GM12878 (cell line): ENCODE measurements at regions of chr5 and their contacts with region 1.

Region 1: GRCh38 chr5:95730730-95731570 is at the start of gene RHOBTB3:
- DNase-seq: no peak
- ATAC-seq: peak; percentile 53
- H3K4me3 ChIP-seq: peak within 1 kb of the TSS; percentile 78
- H3K27ac ChIP-seq: peak within 1 kb of the TSS; percentile 70
- H3K4me1 ChIP-seq: peaks cover 21% of the 10 kb centered on the region
- H3K27me3 ChIP-seq: no peaks in the 10 kb centered on the region
- CTCF ChIP-seq: peak in 2 of 3 experiments; percentile 4 to 22; a peak in 3 of 6 replicates
- EP300 ChIP-seq: 0 out of 4 replicates have a peak, but pooled peaks of 1 of the 2 experiments have one; percentile 8
- POLR2A ChIP-seq: peak; percentile 77
- RAD21 ChIP-seq: no peak
- polyA plus RNA-seq, gene RHOBTB3: 3.6 to 4.1 TPM

Region 2: DNA sequence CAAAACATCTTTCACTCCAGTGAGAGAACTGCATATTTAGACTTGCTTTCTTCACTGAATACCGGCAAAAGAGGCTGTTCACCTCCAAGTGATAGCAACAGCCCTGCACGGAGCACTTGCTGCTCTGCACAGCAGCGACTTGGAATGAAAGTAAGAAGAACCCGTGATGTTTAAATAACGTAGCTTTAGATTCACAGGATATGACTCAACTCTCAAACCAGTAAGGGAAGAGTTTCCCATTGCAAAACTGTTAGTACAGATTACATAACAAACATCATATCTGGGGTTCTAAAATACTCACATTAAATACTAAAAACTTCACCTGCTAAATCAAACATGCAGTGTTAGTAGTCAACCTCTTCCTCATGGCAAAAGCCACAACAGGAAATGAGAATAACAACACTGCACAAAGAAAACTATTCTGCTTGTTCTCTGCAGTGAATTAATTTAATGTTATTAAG is 649.4 kb before region 1 on chr5:
- CTCF ChIA-PET with region 1: no interaction called
- POLR2A ChIA-PET with region 1: no interaction called
- RAD21 ChIA-PET with region 1: no interaction called
- SMC1A ChIA-PET with region 1: no interaction called
- in situ Hi-C with region 1: no loop called
- intact Hi-C with region 1: loop called (anchors 10 kb)
- DNase-seq: peak; percentile 89
- ATAC-seq: peak; percentile 85
- H3K4me3 ChIP-seq: peak overlapping the region; percentile 37
- H3K27ac ChIP-seq: peak overlapping the region; percentile 66
- H3K4me1 ChIP-seq: no peaks in the 10 kb centered on the region
- H3K27me3 ChIP-seq: no peaks in the 10 kb centered on the region
- CTCF ChIP-seq: no peak
- EP300 ChIP-seq: peak; percentile 26 to 55; a peak in 2 of 4 replicates
- POLR2A ChIP-seq: peak; percentile 85
- RAD21 ChIP-seq: no peak

Region 3: DNA sequence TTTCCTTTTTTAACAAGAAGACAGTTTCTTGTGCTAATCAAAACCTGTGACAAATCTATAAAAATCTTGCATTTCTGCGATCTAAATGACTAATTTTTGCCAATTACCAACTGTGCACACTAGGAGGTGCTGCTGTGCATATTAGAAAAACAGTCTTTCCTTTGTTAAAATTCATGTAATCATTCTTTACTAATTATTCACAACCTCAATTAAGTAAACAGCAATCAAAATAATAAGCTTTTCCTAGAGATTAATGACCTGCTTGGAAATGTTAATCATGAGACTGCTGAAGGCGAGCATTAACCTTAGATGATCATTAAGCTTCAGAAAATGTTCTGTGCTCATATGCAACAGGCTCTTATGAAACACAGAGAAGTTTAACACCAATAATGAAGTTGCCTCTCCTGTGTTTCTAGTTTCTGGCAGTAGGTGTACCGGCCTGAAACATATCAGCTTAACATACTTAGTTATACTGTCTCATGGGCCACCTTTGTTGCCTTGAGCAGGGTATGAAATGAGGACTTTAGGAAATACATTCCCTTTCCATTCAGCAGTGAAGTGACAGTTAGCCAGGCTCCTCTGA is 66.7 kb before region 1 on chr5:
- CTCF ChIA-PET with region 1: interaction called, 23 read pairs
- POLR2A ChIA-PET with region 1: no interaction called
- RAD21 ChIA-PET with region 1: interaction called, 25 read pairs
- SMC1A ChIA-PET with region 1: interaction called, 46 read pairs
- in situ Hi-C with region 1: no loop called
- intact Hi-C with region 1: loop called (anchors 1 kb)
- DNase-seq: peak; percentile 11
- ATAC-seq: peak; percentile 38; the same call in 2 of the 3 replicates
- H3K4me3 ChIP-seq: no peak overlapping the region
- H3K27ac ChIP-seq: no peak overlapping the region
- H3K4me1 ChIP-seq: no peaks in the 10 kb centered on the region
- H3K27me3 ChIP-seq: no peaks in the 10 kb centered on the region
- CTCF ChIP-seq: peak; percentile 66 to 84 (median 80)
- EP300 ChIP-seq: no peak
- POLR2A ChIP-seq: no peak
- RAD21 ChIP-seq: peak; percentile 76

Region 4: DNA sequence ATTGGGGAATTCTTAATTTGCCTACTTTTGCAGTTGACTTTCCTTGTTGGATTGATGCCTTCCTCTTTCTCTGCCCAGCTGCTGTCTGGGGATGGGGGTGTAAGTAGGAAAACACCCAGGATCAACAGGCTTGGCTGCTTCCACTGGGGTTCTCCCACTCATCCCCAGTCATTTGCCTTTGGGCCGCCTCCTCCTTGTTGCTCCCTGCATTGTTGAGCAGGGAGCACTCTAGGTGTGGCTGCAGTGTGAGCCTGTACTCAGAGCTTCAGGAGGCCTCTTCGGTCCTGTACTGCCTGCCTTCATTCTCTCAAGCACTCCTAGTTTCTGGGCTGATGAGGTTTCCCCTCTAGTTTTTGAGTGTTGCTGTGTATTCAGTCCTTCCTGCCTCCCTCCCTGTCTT is 12.3 kb after region 1 on chr5:
- CTCF ChIA-PET with region 1: interaction called, 7 read pairs
- POLR2A ChIA-PET with region 1: interaction called, 7 read pairs
- RAD21 ChIA-PET with region 1: interaction called, 17 read pairs
- SMC1A ChIA-PET with region 1: interaction called, 33 read pairs
- in situ Hi-C with region 1: no loop called
- intact Hi-C with region 1: no loop called
- DNase-seq: no peak
- ATAC-seq: no peak
- H3K4me3 ChIP-seq: no peak overlapping the region
- H3K27ac ChIP-seq: no peak overlapping the region
- H3K4me1 ChIP-seq: 0 out of 2 replicates have a peak, but pooled peaks cover 1% of the 10 kb centered on the region
- H3K27me3 ChIP-seq: no peaks in the 10 kb centered on the region
- CTCF ChIP-seq: no peak
- EP300 ChIP-seq: no peak
- POLR2A ChIP-seq: no peak
- RAD21 ChIP-seq: no peak

Region 5: GRCh38 chr5:95781101-95781583 is 50.2 kb after region 1 on chr5:
- CTCF ChIA-PET with region 1: interaction called, 23 read pairs
- POLR2A ChIA-PET with region 1: interaction called, 3 read pairs
- RAD21 ChIA-PET with region 1: interaction called, 21 read pairs
- SMC1A ChIA-PET with region 1: interaction called, 12 read pairs
- in situ Hi-C with region 1: no loop called
- intact Hi-C with region 1: no loop called
- DNase-seq: peak; percentile 51
- ATAC-seq: peak; percentile 100
- H3K4me3 ChIP-seq: no peak overlapping the region
- H3K27ac ChIP-seq: no peak overlapping the region
- H3K4me1 ChIP-seq: no peaks in the 10 kb centered on the region
- H3K27me3 ChIP-seq: no peaks in the 10 kb centered on the region
- CTCF ChIP-seq: peak; percentile 84 to 86 (median 86)
- EP300 ChIP-seq: no peak
- POLR2A ChIP-seq: no peak
- RAD21 ChIP-seq: peak; percentile 95

Region 6: GRCh38 chr5:95835682-95836385 is 104.9 kb after region 1 on chr5:
- CTCF ChIA-PET with region 1: interaction called, 5 read pairs
- POLR2A ChIA-PET with region 1: interaction called, 4 read pairs
- RAD21 ChIA-PET with region 1: interaction called, 4 read pairs
- SMC1A ChIA-PET with region 1: interaction called, 4 read pairs
- in situ Hi-C with region 1: no loop called
- intact Hi-C with region 1: loop called (anchors 5 kb)
- DNase-seq: no peak
- ATAC-seq: peak; percentile 45
- H3K4me3 ChIP-seq: peak overlapping the region; percentile 72
- H3K27ac ChIP-seq: peak overlapping the region; percentile 86
- H3K4me1 ChIP-seq: peaks cover 22% of the 10 kb centered on the region
- H3K27me3 ChIP-seq: no peaks in the 10 kb centered on the region
- CTCF ChIP-seq: no peak
- EP300 ChIP-seq: no peak
- POLR2A ChIP-seq: no peak
- RAD21 ChIP-seq: no peak